Dendritic cell treated with granulocyte-macrophage colony-stimulating factor and Interleukin-4, amounts not matched to agents 40 ng/mL and 50 ng/mL, for 4 days (primary cell): ENCODE measurements at regions of chr20 and their contacts with region 1.

Region 1: GRCh38 chr20:59515014-59515905 is 89.1 kb upstream of the PHACTR3 start:
- H3K4me3 Mint-ChIP-seq: no peak overlapping the region
- H3K27ac Mint-ChIP-seq: no peak overlapping the region
- H3K4me1 Mint-ChIP-seq: no peaks in the 10 kb centered on the region
- H3K27me3 Mint-ChIP-seq: peaks cover 47% of the 10 kb centered on the region

Region 2: GRCh38 chr20:59356662-59357165 is 158.5 kb before region 1 on chr20:
- intact Hi-C with region 1: no loop called
- H3K4me3 Mint-ChIP-seq: no peak overlapping the region
- H3K27ac Mint-ChIP-seq: no peak overlapping the region
- H3K4me1 Mint-ChIP-seq: peaks cover 15% of the 10 kb centered on the region
- H3K27me3 Mint-ChIP-seq: peaks cover 11% of the 10 kb centered on the region

Region 3: DNA sequence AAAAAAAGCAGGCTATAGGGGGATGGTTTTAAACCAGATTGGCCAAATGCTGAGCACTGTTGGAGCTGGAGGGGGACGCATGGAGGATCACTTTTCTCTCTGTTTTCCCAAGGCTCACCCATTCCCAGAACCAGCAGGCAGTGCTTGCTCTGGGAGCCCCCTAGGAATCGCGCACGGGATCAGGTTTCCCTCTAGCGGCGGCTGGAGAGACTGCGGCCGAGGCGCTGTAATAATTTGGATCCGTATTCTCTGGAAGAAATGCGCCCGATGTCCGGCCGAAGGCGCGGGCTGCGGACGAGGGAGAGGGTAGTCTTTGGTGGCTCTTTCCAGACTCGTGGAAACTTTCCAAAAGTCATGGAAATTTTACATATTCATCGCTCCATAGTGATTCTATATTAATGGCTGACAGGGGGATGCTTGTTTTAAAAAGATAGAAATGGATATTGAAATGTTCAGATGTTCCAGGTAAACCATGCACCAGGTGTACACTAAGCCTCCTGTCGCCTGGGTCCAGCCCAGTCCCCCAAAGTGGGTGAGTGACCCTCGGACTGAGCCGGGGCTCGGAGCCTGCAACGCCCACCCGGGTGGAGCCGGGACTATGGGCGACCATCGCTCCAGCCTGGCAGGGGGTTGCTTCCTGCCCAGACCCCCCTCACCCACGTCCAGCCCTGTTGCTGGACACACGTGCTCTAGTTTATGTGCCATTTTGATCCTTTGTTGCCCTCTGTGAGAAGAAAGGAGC is 10.4 kb after region 1 on chr20:
- intact Hi-C with region 1: loop called (anchors 1 kb)
- H3K4me3 Mint-ChIP-seq: no peak overlapping the region
- H3K27ac Mint-ChIP-seq: no peak overlapping the region
- H3K4me1 Mint-ChIP-seq: peaks cover 5% of the 10 kb centered on the region
- H3K27me3 Mint-ChIP-seq: peaks cover 66% of the 10 kb centered on the region